Activated CD8-positive, alpha-beta memory T cell treated with anti-CD3 and anti-CD28 coated beads, Interleukin-2, amount 10 ng/mL, durations not matched to agents 7 days and 5 days (primary cell): ENCODE measurements at regions of chr18 and their contacts with region 1.

Region 1: DNA sequence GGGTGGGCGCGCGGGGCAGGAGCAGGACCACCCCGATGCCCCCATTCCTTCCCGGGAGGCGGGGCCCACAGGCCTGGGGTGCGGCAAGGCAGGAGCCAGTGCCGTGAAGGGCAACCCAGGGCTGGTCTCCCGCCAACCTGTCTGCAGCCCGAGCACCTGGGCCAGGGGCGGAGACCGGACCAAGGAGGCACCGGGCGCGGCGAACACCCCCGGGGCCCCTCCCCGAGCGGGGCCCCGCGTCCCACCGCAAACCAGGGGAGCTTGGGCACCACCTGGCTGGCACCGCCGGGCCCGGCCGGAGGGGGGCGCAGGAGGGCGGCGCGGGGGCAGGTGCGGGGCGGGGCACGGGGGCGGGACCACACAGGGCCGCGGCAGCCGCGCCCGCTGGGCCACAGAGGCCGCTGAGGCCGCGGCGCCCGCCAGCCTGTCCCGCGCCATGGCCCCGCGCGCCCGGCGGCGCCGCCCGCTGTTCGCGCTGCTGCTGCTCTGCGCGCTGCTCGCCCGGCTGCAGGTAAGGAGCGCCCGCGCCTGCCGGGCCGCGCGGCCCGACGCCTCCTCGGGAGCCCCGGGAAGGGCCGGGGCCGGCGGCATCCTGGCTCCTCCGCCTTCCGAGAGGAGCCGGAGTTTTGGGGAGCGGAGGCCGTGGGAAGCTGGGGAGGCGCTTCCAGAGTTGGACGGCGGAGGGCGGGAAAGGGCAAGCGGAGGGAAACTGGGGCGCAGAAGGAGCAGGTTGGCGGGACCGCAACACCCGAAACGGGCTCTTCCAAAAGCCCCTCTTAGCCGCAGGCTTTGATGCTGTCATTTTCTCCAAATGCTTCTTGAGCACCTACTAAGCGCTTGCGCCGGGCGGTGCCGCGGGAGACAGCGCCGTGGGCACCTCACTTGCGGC is at the start of gene TNFRSF11A:
- DNase-seq: peak; percentile 72
- ATAC-seq: peak; percentile 84
- H3K4me3 Mint-ChIP-seq: peak within 1 kb of the TSS; percentile 79
- H3K27ac Mint-ChIP-seq: peak within 1 kb of the TSS; percentile 33
- H3K4me1 Mint-ChIP-seq: peaks cover 49% of the 10 kb centered on the region
- H3K27me3 Mint-ChIP-seq: peaks cover 57% of the 10 kb centered on the region
- total RNA-seq, gene TNFRSF11A: 8.0 to 9.7 TPM

Region 2: GRCh38 chr18:62339106-62339988 is 14.2 kb after region 1 on chr18:
- CTCF ChIA-PET with region 1: interaction called, 10 read pairs
- DNase-seq: peak; percentile 55
- ATAC-seq: peak; percentile 89
- H3K4me3 Mint-ChIP-seq: no peak overlapping the region
- H3K27ac Mint-ChIP-seq: peak overlapping the region; percentile 73
- H3K4me1 Mint-ChIP-seq: peaks cover 39% of the 10 kb centered on the region
- H3K27me3 Mint-ChIP-seq: peaks cover 8% of the 10 kb centered on the region